PC-9 (cell line): ENCODE measurements at regions of chr19 and their contacts with region 1.

Region 1: GRCh38 chr19:5577785-5578493 is 10.2 kb upstream of the TINCR start:
- DNase-seq: peak in 1 of 2 experiments; percentile 59
- H3K4me3 ChIP-seq: no peak overlapping the region
- H3K27ac ChIP-seq: no peak overlapping the region
- H3K4me1 ChIP-seq: peaks cover 13% of the 10 kb centered on the region
- H3K27me3 ChIP-seq: no peaks in the 10 kb centered on the region
- CTCF ChIP-seq: peak; percentile 91

Region 2: DNA sequence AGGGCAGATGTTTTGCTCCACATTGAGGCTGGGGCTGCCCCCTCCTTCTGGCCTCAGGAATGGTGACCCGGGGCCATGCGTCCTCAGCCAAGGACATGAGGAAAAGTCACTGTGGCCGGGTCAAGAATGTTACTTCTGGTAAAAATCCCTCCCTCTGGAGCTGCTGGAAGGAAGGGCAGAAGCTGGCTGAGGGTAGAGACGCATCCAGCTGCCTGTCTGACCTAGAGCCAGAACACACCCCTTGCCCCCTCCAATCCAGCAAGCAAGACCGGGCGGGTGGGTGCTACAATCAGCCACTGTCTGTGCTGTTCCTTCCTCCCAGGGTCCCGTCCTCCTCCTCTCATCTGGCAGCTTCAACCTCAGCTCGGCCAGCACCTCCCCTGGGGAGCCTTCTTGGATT is 296.4 kb before region 1 on chr19:
- CTCF ChIA-PET with region 1: no interaction called
- POLR2A ChIA-PET with region 1: no interaction called
- intact Hi-C with region 1: loop called (anchors 10 kb)
- DNase-seq: no peak
- H3K4me3 ChIP-seq: no peak overlapping the region
- H3K27ac ChIP-seq: no peak overlapping the region
- H3K4me1 ChIP-seq: no peaks in the 10 kb centered on the region
- H3K27me3 ChIP-seq: no peaks in the 10 kb centered on the region
- CTCF ChIP-seq: no peak

Region 3: DNA sequence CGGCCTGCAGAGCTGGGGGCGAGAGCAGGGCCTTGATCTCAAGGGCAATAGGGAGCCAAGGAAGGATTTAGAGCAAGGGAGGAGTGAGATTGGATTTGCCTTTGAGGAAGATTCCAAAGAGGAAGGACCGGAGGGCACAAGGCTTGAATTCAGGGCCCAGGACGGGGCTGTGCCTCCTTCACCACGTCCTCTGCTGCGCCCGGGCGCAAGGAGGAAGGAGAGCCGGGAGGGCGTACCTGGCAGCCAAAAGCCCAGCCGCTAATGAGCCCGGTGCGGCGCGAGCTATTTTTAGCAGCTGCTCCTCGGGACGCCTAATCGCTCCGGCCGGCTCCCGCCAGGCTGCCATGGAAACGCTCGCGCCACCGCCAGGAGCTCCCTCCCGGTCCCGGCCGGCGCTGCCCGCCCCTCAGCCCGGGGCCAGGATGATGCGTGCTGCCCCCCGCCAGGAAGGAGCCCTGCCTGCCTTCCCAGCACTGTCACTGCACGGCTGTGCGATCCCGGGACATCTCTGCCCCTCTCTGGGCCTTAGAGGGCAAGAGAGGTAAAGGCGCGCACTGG is 41.5 kb before region 1 on chr19:
- CTCF ChIA-PET with region 1: no interaction called
- POLR2A ChIA-PET with region 1: no interaction called
- intact Hi-C with region 1: loop called (anchors 5 kb)
- DNase-seq: peak in 1 of 2 experiments; percentile 63
- H3K4me3 ChIP-seq: peak overlapping the region; percentile 47; the same call in 1 of the 2 replicates
- H3K27ac ChIP-seq: peak overlapping the region; percentile 53
- H3K4me1 ChIP-seq: peaks cover 10% of the 10 kb centered on the region
- H3K27me3 ChIP-seq: no peaks in the 10 kb centered on the region
- CTCF ChIP-seq: no peak